ENCODE measurements at regions of chr5 and their contacts with region 1.

Region 1: DNA sequence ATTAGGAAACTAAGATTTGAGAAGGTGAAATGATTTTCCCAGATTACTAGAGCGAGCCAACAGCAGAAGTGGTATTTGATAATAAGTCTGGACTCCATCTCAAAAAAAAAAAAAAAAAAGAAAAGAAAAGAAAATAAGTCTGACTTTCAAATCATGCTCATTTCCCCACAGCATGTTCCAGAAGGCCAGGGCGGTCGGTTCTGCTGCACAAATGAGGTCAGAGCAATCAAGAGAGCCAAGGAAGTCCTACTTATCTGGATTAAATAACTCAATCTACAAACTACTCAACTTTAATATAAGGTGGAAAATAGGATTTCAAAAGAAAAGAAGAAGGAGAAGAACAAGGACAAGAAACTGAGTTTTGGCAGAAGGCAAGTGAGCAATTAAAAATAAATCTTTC is 130.4 kb upstream of the RASA1 start:
- DNase-seq: no peak
- H3K4me3 ChIP-seq: no peak overlapping the region
- CTCF ChIP-seq: no peak

Region 2: GRCh38 chr5:87029951-87030350 is 107.3 kb before region 1 on chr5:
- in situ Hi-C with region 1: no loop called
- DNase-seq: no peak
- H3K4me3 ChIP-seq: no peak overlapping the region
- CTCF ChIP-seq: no peak

Region 3: GRCh38 chr5:87061046-87061445 is 76.2 kb before region 1 on chr5:
- in situ Hi-C with region 1: loop called (anchors 5 kb)
- DNase-seq: no peak
- H3K4me3 ChIP-seq: no peak overlapping the region
- CTCF ChIP-seq: no peak